ENCODE measurements at regions of chr17 and their contacts with region 1.

Region 1: DNA sequence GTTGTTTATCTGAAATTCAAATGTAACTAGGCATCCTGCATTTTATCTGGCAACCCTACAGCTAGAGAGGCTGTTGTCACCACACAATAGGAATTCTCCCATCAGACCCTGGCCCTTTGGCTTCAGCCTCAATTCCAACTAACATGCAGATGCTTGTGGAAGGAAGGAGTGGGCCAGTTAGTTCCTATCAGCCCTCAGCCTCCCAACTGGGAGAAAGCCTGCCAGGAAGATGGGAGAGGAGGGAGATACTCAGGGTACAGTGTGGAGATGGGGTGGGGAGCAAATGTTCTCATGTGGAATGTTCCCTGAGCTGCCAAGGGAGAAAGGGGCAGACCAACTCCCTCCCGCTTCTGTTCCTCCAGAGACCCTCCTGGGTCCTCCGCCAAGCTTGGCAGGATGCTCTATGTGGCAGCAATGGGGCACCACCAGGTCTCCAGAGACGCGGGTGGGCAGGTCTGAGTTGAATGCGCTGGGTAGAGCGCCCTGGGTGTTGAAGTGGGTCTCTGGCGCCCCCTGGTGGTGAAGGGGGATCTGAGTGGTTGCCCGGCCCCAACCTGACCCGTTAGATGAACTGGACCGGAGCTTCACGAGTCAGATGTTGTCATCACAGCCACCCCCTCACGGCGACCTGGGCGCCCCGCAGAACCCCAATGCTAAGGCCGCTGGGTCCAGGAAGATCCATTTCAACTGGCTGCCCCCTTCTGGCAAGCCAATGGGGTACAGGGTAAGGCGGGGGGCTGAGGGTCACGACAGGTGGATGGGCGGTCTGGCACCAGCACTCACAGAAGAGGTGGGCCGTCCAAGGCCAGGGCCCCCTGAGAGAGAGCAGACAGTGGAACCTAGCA is 15.2 kb downstream of the GALK1 start:
- DNase-seq: peak; percentile 86
- CTCF ChIP-seq: peak; percentile 89

Region 2: DNA sequence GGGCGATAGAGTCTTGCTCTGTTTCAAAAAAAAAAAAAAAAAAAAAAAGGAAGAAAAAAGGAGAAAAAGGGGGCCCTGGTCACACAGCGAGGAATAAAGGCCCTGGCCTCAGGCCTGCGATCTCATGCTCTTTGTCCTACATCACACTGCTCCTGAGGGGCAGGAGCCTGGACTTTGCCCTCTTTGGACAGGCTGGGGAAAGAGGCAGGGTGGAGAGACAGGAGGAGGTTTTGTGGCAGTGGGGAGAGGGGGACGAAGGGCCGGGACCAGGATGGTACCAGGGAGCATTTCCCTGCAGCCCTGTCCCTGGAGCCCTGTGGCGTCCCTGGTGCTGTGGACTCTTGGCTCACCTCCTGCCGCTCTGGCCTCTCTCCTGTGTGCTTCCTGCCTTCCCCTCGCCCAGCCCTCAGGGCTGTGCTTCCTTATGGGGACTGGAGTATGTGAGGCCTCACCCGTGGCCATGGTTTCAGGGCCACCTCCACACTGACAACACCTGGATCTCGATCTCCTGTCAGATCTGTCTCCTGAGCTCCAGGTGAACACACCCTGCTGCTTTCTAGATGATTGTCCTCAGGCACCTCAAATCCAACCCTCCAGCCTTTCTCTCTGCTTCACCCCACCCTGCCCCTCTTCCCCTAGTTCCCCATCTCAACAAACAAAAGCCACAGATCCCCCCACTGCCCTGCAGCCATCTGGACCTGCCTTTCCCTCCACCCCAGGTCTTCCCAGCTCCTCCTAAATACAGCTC is 440.6 kb before region 1 on chr17:
- CTCF ChIA-PET with region 1: no interaction called
- POLR2A ChIA-PET with region 1: no interaction called
- DNase-seq: no peak
- CTCF ChIP-seq: no peak

Region 3: DNA sequence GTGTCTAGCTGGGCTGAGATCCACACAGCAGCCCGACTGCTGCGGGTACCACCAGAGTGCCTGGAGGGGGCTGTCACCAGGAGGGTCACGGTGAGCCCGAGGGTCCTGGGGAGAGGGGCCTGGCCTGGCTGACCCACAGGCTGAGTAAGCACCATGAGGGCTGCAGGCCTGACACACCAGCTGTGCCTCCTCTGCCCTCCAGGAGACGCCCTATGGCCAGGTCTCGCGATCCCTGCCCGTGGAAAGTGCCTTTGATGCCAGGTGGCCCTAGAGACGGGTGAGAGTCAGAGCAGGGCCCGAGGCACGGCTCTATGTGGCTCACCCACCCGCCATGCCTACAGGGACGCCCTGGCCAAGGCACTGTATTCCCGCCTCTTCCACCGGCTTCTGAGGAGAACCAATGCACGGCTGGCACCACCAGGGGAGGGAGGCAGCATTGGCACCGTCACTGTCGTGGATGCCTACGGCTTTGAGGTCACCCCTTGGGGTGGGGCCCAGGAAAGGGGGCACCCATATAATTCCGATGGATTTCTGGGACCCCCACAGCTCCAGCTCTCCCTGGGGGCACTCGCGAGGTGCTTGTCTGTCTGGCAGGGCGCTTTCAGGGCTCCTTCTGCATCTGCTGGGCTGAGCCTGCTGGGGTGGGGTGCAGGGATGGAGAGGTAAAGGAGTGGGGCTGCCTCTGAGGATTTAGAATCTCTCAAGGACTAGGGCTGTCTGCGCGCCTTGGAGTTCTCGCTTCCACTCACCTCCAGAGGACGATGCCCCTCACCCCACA is 155.1 kb before region 1 on chr17:
- CTCF ChIA-PET with region 1: interaction called, 165 read pairs
- POLR2A ChIA-PET with region 1: no interaction called
- DNase-seq: no peak
- CTCF ChIP-seq: no peak

Region 4: GRCh38 chr17:75632863-75633485 is 116.8 kb before region 1 on chr17 and contains the start of gene SMIM5:
- CTCF ChIA-PET with region 1: interaction called, 856 read pairs
- POLR2A ChIA-PET with region 1: no interaction called
- DNase-seq: peak; percentile 93
- CTCF ChIP-seq: peak; percentile 93

Region 5: DNA sequence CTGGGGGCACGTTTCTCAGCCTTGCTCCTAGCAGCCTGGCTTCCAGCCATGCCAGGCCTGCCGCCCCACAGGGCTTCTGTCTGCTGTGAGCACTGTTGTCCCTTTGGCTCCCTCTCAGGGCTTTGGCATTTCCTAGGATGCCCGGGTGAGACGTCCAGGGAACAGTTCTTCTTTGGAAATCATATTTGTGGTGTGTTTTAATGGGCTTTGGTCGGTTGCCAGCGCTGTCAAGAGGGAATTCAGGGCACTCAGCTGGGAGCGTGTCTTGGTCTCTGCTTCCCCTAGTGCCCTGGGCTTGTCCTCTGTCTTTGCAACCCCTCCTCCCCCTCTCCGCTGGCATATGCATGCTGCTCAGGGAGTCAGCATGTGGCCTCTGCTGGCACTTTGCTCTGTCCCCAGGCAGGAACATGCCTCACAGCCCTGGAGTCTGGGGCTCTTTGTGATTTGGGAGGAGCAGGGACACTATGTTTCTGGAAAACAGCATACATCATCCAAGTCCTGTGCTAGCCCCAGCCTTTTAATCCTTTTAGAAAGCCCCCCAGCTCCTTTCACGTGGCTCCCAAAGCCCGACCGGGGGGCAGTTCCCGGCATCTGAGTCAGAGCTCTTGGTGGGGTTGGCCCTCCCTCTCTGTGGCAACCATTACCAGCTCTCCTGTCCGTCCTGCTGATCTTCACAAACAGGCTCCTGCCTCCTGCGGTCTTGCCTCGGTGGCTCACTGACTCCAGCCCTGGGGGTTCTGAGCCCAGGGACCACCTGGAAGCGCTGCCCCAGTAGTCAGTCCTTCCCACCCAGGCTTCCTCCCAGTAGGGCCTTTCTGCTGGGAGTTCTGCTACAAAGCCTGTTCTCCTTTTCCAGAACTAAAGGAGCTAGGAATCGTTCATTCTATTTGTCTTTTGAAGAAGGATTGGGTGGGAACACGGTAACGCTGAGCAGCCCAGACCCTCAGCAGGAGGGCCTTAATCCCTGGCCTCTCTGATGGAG is 56.0 kb before region 1 on chr17:
- CTCF ChIA-PET with region 1: interaction called, 424 read pairs
- POLR2A ChIA-PET with region 1: no interaction called
- DNase-seq: no peak
- CTCF ChIP-seq: no peak

Region 6: GRCh38 chr17:75738218-75738802 is 11.5 kb before region 1 on chr17:
- CTCF ChIA-PET with region 1: interaction called, 75 read pairs
- POLR2A ChIA-PET with region 1: no interaction called
- DNase-seq: peak; percentile 53
- CTCF ChIP-seq: no peak

Region 7: DNA sequence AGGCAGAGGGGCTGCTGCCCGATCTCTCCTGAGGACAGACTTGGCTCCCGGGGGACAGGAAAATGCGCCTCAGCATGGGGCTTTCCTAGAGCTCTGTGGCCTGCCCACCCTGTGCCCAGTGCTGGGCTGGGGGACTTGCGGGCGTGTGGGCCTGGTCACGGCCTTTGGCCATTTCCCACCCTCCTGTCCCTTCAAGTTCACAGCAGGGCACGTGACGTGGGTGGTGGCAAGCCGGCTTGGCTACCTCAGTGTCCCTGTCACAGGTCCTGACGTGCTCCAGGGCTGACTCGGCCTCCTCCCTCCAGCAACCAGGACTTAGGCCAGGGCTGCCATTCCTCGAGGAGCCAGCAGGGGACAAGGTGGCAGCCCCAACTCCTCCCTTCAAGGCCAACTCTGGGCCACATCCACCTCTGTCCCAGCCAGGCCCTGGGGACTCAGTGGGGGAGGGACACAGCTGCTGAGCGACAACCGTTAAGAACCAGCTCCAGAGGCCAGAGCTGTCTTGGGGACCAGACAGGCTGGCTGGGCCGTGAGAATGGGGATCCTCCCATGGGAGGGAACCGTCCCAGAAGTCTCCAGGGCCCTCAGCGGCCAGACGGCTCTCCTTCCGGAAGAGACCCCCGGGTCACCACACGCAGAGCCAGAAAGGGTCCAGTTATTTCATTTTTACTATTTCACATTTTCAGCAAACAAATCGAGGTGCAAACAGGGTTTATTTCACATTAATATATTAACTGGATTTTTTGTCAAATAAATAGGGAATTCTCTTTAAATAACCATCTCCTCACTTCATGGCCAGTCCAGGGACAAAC is 95.5 kb after region 1 on chr17:
- CTCF ChIA-PET with region 1: interaction called, 15 read pairs
- POLR2A ChIA-PET with region 1: no interaction called
- DNase-seq: peak; percentile 91
- CTCF ChIP-seq: peak; percentile 69

Measured in GM10248 (cell line).